ENCODE measurements at regions of chr3 and their contacts with region 1.

Region 1: DNA sequence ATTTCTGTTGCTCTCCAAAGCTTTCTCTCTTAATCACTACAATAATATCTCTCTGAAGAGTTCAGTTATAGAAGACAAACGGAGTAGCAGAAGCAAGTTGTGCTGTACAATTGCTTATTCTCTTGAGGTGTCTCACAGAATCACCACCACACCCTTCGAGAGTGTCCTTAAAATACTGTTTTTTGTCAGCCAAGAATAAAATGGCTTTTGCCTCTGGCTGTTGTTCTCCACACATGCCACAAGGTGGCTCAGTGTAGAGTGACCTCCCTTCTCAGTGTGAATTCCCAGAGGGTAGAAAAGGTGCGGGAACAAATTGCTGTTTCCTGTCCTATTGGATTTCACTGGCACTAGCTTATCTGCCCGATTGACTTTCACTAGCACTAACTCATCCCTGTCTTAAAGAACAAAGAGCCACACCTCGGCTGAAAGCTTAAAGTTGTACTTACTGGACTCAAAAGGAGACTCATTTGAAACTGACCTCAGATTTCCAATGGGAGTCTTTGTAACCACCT is 134.2 kb upstream of the SATB1 start:
- DNase-seq: peak; percentile 47
- H3K4me3 Mint-ChIP-seq: peak overlapping the region; percentile 39
- H3K27ac Mint-ChIP-seq: peak overlapping the region; percentile 88
- H3K4me1 Mint-ChIP-seq: peaks cover 66% of the 10 kb centered on the region
- H3K27me3 Mint-ChIP-seq: no peaks in the 10 kb centered on the region

Region 2: DNA sequence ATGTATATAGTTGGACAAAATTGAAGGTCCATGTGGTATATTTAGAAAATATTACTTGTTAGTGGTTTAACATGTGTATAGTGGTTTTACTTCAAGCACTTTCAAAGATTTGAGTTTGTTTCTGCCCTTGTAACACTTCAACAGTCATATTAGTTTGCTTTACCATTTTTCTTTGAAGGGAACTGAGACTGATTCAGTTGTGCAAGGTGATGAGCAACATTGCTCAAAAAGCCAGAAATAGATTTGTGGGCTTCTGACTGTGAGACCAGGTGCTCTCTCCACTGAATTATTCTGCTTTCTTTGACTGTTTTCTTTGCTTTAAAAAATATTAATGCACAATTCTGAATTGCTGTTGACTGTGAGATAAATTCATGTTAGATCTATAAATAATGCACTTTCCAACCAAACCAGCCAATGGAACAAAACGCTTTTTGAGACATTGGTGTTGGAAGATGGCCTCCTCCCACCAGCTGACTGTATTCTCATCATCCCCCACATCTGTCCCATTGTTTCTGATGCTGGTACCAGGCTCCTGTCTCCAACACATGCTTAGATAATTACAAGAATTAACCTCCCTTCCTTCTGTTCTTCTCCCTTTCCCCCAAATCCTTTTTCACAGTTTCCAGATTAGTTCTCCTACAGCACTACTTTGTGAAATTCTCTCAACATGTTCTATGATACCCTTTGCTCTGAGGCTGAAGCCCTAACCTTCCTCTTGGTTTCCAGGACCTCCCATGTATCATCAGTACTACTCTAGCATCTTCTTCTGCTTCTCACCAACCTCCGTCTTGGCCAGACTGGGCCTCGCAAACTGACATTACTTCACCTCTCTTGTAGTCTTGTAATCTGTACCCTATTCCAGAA is 1646.8 kb before region 1 on chr3:
- CTCF ChIA-PET with region 1: no interaction called
- intact Hi-C with region 1: loop called (anchors 10 kb)
- DNase-seq: no peak
- H3K4me3 Mint-ChIP-seq: no peak overlapping the region
- H3K27ac Mint-ChIP-seq: peak overlapping the region; percentile 57
- H3K4me1 Mint-ChIP-seq: peaks cover 77% of the 10 kb centered on the region
- H3K27me3 Mint-ChIP-seq: no peaks in the 10 kb centered on the region

Region 3: DNA sequence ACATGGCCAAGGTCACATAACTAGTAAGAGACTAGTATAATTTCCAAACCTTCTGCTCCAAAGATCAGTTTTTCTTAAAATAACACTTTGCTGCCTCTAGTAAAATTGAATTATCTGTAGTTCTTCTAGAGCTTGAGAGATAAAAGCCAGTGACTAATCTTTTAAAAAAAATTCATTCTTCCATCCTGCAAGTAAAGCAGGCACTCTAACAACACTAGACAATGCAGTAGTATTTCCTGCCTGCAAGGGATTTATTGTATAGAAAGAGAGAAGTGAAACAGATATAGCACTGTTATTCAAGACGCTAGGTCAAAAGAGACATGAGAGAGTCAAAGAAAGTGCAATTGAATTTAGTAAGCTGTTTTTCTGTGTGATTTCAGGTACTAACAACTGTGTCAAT is 657.5 kb before region 1 on chr3:
- CTCF ChIA-PET with region 1: no interaction called
- intact Hi-C with region 1: no loop called
- DNase-seq: no peak
- H3K4me3 Mint-ChIP-seq: no peak overlapping the region
- H3K27ac Mint-ChIP-seq: no peak overlapping the region
- H3K4me1 Mint-ChIP-seq: no peaks in the 10 kb centered on the region
- H3K27me3 Mint-ChIP-seq: no peaks in the 10 kb centered on the region

Region 4: GRCh38 chr3:18444595-18445400 is 114.6 kb before region 1 on chr3:
- CTCF ChIA-PET with region 1: interaction called, 4 read pairs
- intact Hi-C with region 1: loop called (anchors 1 kb)
- DNase-seq: peak; percentile 83
- H3K4me3 Mint-ChIP-seq: peak overlapping the region; percentile 94
- H3K27ac Mint-ChIP-seq: peak overlapping the region; percentile 97
- H3K4me1 Mint-ChIP-seq: peaks cover 36% of the 10 kb centered on the region
- H3K27me3 Mint-ChIP-seq: no peaks in the 10 kb centered on the region

Region 5: GRCh38 chr3:18489939-18490338 is 69.4 kb before region 1 on chr3:
- CTCF ChIA-PET with region 1: no interaction called
- intact Hi-C with region 1: no loop called
- DNase-seq: peak; percentile 60
- H3K4me3 Mint-ChIP-seq: no peak overlapping the region
- H3K27ac Mint-ChIP-seq: no peak overlapping the region
- H3K4me1 Mint-ChIP-seq: peaks cover 18% of the 10 kb centered on the region
- H3K27me3 Mint-ChIP-seq: no peaks in the 10 kb centered on the region

Region 6: DNA sequence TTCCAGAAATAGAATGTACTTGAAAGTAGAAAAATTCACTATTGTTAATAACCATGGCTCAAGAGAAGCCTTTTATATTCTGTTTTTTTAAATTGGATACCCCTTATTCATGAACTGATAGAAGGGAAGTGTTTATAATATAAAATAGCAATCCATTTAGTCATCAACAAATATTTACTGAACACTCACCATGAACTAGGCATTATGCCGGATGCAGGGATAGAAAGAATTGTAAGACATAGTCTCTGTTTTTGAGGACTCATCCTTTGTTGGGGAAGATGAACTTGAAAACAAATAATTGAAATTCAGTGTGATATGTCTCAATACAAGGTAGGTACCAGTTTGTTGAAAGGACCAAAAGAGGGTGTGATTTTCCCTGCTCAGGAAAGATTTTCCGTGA is 26.7 kb after region 1 on chr3:
- CTCF ChIA-PET with region 1: no interaction called
- intact Hi-C with region 1: no loop called
- DNase-seq: no peak
- H3K4me3 Mint-ChIP-seq: no peak overlapping the region
- H3K27ac Mint-ChIP-seq: no peak overlapping the region
- H3K4me1 Mint-ChIP-seq: peaks cover 5% of the 10 kb centered on the region
- H3K27me3 Mint-ChIP-seq: no peaks in the 10 kb centered on the region

Region 7: DNA sequence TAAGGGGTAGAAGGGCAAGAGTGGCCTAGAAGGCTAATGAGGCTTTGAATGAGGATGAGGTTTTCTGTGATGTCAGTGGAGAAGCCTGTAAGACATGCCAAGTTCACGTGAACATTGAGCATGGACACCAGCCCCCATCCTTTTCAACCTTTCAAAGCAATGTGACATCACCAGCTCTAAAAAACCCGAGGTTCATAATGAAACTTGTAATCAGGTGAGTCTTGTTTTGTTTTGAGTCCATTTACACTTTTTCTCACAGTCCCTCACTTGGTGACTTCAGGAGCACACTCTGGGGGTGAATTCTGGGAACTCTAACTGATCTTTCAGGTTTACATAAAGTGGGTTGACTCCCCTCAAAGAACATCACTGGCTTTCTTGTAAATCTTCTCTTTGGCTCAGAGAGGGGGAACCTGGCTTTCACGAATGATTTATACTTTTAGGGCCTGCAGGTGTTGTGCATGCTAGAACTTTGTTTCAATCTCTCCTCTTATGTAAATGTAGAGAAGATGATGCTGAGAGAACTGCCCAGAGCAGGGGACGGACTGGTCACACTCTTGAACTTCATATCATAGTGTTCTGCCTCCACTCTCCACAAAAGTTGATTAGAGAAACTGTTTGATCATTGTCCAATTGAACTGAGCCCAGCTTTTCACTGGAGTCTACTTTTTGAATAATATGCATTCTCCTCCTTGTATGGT is 90.4 kb after region 1 on chr3:
- CTCF ChIA-PET with region 1: interaction called, 9 read pairs
- intact Hi-C with region 1: loop called (anchors 1 kb)
- DNase-seq: peak; percentile 87
- H3K4me3 Mint-ChIP-seq: no peak overlapping the region
- H3K27ac Mint-ChIP-seq: peak overlapping the region; percentile 92
- H3K4me1 Mint-ChIP-seq: peaks cover 74% of the 10 kb centered on the region
- H3K27me3 Mint-ChIP-seq: no peaks in the 10 kb centered on the region

Region 8: GRCh38 chr3:18740631-18741583 is 181.5 kb after region 1 on chr3:
- CTCF ChIA-PET with region 1: interaction called, 6 read pairs
- intact Hi-C with region 1: loop called (anchors 1 kb)
- DNase-seq: peak; percentile 77
- H3K4me3 Mint-ChIP-seq: peak overlapping the region; percentile 63
- H3K27ac Mint-ChIP-seq: peak overlapping the region; percentile 97
- H3K4me1 Mint-ChIP-seq: peaks cover 88% of the 10 kb centered on the region
- H3K27me3 Mint-ChIP-seq: no peaks in the 10 kb centered on the region

Region 9: DNA sequence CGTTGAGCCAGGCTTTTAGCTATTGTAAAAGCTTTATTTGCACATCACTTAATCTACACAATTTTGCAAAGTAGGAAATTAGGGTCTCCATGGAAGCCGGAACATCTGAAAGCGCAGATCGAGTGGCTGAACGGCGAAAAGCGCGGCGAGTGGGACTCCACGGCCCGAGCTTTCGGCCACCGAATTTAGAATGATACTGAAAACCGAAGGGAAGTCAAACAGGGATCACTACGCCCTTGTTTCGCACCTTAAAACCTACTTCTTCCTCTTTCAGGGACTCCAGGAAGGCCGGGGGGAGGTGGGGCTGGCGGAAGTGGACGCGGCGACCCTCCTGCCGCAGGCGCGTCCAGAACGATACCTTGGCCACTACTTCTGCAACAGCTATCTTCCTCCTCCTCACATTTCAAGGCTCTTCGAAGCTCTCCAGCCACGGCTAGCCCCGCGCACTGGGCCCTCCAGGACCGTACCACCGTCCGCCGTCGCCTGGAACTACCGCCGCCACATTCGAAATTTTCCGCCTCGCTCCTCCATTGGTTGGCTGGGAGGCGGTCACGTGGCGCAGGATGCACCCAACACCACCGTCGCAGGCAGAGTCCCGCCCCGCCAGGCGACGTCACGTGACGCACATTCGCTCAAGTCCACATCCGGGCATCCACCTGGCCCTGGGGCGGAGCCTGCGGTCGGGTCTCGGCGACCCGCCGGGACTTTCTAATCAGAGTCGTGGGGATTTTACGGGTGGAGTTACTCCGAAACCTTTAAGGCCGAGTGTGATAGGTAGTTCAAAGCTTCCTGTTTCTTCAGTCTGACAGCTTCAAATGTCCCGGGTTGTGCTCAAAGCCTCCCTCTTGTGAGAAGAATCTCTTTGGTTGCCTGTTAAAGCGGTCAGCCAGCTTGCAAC is 1626.6 kb after region 1 on chr3 and contains the start of gene SGO1:
- CTCF ChIA-PET with region 1: no interaction called
- intact Hi-C with region 1: loop called (anchors 2 kb)
- DNase-seq: peak; percentile 99
- H3K4me3 Mint-ChIP-seq: no peak within 1 kb of the TSS
- H3K27ac Mint-ChIP-seq: no peak within 1 kb of the TSS
- H3K4me1 Mint-ChIP-seq: peaks cover 2% of the 10 kb centered on the region
- H3K27me3 Mint-ChIP-seq: no peaks in the 10 kb centered on the region
- total RNA-seq, gene SGO1: 36.2 to 37.5 TPM